HepG2 (cell line): ENCODE measurements at regions of chr19 and their contacts with region 1.

Region 1: DNA sequence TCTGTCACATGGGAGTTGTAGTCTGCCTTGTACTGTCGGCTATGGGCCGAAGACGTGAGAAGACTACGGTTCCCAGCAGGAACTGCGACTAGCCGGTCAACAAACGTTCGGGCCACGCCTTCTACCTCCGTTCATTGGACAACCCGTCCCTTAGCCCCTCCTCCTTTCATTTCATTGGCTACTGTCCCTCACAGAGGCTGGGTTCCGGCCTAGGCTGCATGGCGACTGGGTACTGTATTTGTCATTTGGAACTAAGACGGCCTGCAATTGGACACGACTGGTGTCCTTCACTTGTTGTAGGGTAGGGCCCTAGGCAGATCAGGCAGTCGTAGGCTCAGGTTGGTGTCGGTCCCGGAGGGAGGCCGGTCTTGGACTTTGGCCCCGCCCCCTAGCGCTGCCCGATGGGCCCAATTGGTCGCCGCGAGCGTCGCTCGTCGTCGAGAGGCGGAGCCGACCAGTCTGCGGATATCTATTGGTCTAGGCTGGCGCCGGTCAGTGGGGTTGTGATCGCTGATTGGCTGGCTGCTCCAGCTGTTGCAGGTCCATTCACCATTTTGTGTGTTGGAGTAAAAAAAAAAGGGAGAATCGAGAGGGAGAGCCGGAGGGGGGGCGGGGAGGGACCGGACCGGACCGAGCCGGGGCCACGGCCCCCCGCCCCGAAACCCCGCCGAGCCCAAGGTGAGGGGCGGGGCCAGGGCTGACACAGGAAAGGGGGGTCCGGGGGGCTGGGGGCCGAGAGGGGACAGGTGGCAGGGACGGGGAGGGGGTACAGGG is at the start of gene CIC:
- DNase-seq: peak; percentile 100
- ATAC-seq: peak; percentile 94
- H3K4me3 ChIP-seq: peak within 1 kb of the TSS; percentile 75 to 81 (median 81)
- H3K27ac ChIP-seq: peak within 1 kb of the TSS; percentile 96
- H3K4me1 ChIP-seq: peaks cover 29% of the 10 kb centered on the region
- H3K27me3 ChIP-seq: no peaks in the 10 kb centered on the region; a peak in 1 of 5 replicates
- CTCF ChIP-seq: no peak
- EP300 ChIP-seq: no peak
- POLR2A ChIP-seq: 0 out of 4 replicates have a peak, but pooled peaks of 1 of the 2 experiments have one; percentile 1
- RAD21 ChIP-seq: no peak
- total RNA-seq, gene CIC: 5.4 and 8.0 TPM in 2 replicates

Region 2: GRCh38 chr19:42254989-42255765 is 13.7 kb before region 1 on chr19 and contains the start of gene ERF:
- CTCF ChIA-PET with region 1: no interaction called
- POLR2A ChIA-PET with region 1: interaction called, 3 read pairs
- in situ Hi-C with region 1: no loop called
- intact Hi-C with region 1: loop called (anchors 1 kb)
- DNase-seq: peak; percentile 74
- ATAC-seq: peak; percentile 61
- H3K4me3 ChIP-seq: peak within 1 kb of the TSS; percentile 95 to 99 (median 99)
- H3K27ac ChIP-seq: peak within 1 kb of the TSS; percentile 100
- H3K4me1 ChIP-seq: peaks cover 64% of the 10 kb centered on the region
- H3K27me3 ChIP-seq: no peaks in the 10 kb centered on the region; a peak in 1 of 5 replicates
- CTCF ChIP-seq: no peak
- EP300 ChIP-seq: no peak
- POLR2A ChIP-seq: peak; percentile 70 to 92
- RAD21 ChIP-seq: peak; percentile 35; the same call in 1 of the 2 replicates
- total RNA-seq, gene ERF: 43.2 and 67.1 TPM in 2 replicates

Region 3: DNA sequence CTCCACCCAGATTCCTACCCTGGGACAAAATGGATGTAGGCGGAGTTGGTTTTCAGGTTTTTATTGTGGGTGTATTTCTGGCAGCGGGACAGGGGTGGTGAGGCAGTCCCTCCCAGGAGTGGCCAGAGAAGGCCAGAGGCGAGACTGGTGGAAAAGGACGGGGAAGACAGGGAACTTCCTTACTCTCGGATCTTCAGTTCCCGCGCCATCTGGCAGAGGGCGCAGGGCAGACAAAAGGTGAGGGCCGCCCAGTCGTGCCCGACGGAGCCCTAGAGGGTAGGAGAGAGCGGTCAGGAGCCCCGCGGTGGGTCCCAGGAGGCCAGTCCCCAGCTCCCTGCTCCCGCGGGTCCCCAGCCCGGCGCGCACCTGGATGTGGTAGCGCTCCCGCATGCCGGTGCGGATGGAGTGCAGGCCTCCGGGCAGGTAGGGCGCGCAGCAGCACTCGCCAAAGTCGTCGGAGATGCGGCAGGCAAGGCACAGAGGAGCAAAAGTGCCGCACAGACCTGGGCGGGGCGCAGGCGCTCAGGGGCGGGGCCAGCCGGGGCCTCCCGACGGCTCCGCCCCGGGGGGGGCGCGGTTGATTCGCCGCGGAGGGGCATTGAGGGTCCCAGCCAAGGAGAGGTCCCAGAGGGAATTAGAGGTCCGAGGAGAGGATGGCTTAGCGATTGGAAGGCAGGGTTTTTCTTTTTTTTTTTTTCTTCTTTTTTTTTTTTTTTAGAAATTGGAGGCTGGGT is 118.2 kb after region 1 on chr19:
- CTCF ChIA-PET with region 1: no interaction called
- POLR2A ChIA-PET with region 1: no interaction called
- in situ Hi-C with region 1: no loop called
- intact Hi-C with region 1: no loop called
- DNase-seq: peak; percentile 63
- ATAC-seq: peak; percentile 95
- H3K4me3 ChIP-seq: peak overlapping the region; percentile 44 to 59 (median 54); a peak in 4 of 6 replicates
- H3K27ac ChIP-seq: no peak overlapping the region
- H3K4me1 ChIP-seq: peaks cover 6% of the 10 kb centered on the region; the same call in 1 of the 2 replicates
- H3K27me3 ChIP-seq: peaks cover 6 to 43% of the 10 kb centered on the region in 2 experiments; a peak in 4 of 5 replicates
- CTCF ChIP-seq: peak; percentile 76
- EP300 ChIP-seq: no peak
- POLR2A ChIP-seq: 0 out of 4 replicates have a peak, but pooled peaks of 1 of the 2 experiments have one; percentile 21
- RAD21 ChIP-seq: peak; percentile 65